ENCODE measurements at regions of chr17 and their contacts with region 1.

Region 1: DNA sequence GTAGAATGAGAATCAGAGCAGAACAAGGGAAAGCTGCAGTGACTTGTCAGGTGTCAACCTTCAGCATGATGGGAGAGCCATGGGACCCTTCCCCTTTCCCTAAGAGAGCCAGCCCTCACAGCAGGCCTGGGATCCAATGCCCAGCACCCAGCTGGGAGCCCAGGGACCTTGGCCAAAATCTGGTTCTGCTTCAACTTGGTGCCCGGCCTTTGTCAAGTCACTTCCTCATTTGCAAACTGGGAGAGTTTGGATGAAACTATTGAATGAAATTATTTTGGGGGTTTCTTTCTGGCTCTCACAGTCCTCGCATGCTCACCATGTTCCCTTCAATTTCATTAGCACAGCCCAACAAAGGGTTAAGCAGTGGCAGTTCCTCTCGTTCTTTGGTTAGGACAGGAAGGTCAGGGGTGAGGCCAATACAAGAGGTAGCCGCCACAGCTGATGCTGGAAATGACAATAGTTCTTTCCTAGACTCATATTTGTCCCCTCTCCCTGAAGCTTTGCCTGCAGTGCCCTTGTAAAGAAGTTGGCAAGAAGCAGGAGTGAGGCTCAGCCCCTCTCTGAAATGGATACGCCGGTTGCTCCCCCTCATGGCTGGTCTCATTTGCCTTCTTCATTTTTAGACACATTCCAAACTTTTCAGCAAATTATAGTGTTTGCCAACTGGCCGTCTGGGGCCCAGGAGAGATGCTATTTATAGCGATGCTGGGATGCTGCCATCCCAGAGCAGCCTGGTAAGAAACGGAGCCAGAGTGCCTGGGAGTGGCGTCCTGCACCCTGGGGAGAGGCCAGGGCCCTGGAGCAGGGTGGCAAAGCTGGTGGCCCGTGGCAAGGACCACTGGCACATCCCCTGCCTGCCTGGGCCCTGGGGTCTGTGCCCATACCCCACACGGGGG is 34.5 kb upstream of the MEOX1 start:
- DNase-seq: no peak
- H3K4me3 ChIP-seq: no peak overlapping the region
- H3K27ac ChIP-seq: no peak overlapping the region
- H3K4me1 ChIP-seq: peaks cover 2% of the 10 kb centered on the region
- H3K27me3 ChIP-seq: no peaks in the 10 kb centered on the region
- CTCF ChIP-seq: no peak

Region 2: DNA sequence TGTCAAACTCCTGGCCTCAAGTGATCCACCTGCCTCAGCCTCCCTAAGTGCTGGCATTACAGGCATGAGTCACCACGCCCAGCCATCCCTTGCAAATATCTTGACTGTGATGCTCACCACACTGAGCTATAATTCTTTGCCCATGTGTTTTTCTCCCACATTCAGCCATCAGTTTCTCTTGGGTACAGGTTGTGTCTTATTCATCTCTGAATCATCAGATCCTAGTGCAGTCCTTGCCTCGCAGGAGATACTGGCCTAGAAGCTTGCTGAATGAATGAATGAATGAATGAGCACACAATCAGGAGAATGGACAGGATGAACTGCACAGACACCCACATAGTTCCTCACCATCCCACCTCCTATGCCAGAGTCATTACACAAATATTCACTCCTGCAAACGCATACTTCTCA is 125.7 kb before region 1 on chr17:
- dilution Hi-C with region 1: no loop called
- DNase-seq: peak; percentile 89
- H3K4me3 ChIP-seq: no peak overlapping the region
- H3K27ac ChIP-seq: peak overlapping the region; percentile 20
- H3K4me1 ChIP-seq: peaks cover 16% of the 10 kb centered on the region
- H3K27me3 ChIP-seq: no peaks in the 10 kb centered on the region
- CTCF ChIP-seq: no peak

Region 3: DNA sequence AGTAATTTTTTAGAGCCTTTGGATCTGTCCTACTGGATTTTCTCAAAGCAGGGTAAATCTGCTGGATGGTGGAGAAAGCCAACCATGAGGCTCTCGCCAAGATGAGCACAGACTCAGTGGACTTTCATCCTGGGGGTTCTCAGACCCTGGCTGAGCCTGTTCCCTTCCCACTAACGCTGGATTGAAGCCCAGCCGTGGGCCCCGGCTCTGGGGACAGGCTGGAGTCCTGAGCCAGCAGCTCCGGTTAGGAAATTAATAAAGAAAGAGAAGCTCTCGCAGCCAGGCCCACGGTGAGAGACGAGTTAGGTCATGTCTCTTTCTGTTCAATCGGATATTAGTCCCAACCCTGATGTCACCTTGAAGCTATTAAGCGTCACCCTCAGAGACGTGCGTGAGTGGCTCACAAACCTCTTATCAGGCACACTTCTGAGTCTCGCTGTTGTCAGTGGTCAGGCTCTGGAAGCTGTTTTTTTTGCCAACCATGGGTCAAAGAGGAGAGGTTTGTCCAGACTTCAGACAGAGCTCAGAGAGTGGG is 61.6 kb before region 1 on chr17:
- dilution Hi-C with region 1: no loop called
- DNase-seq: peak; percentile 33
- H3K4me3 ChIP-seq: peak overlapping the region in 2 of 3 experiments; percentile 11 to 13
- H3K27ac ChIP-seq: peak overlapping the region; percentile 5
- H3K4me1 ChIP-seq: peaks cover 12% of the 10 kb centered on the region
- H3K27me3 ChIP-seq: no peaks in the 10 kb centered on the region
- CTCF ChIP-seq: no peak

Region 4: GRCh38 chr17:43766413-43767052 is 70.3 kb after region 1 on chr17:
- dilution Hi-C with region 1: loop called (anchors 5 kb)
- DNase-seq: no peak
- H3K4me3 ChIP-seq: no peak overlapping the region
- H3K27ac ChIP-seq: no peak overlapping the region
- H3K4me1 ChIP-seq: no peaks in the 10 kb centered on the region
- H3K27me3 ChIP-seq: no peaks in the 10 kb centered on the region
- CTCF ChIP-seq: peak; percentile 80 to 93 (median 90)

Region 5: GRCh38 chr17:43823350-43824084 is 127.3 kb after region 1 on chr17:
- dilution Hi-C with region 1: no loop called
- DNase-seq: no peak
- H3K4me3 ChIP-seq: no peak overlapping the region
- H3K27ac ChIP-seq: no peak overlapping the region
- H3K4me1 ChIP-seq: peaks cover 4% of the 10 kb centered on the region
- H3K27me3 ChIP-seq: no peaks in the 10 kb centered on the region
- CTCF ChIP-seq: no peak

Region 6: GRCh38 chr17:43878260-43879175 is 182.3 kb after region 1 on chr17:
- dilution Hi-C with region 1: no loop called
- DNase-seq: peak; percentile 54
- H3K4me3 ChIP-seq: no peak overlapping the region
- H3K27ac ChIP-seq: no peak overlapping the region
- H3K4me1 ChIP-seq: no peaks in the 10 kb centered on the region
- H3K27me3 ChIP-seq: no peaks in the 10 kb centered on the region
- CTCF ChIP-seq: peak; percentile 91 to 100 (median 93)